ENCODE measurements at regions of chr2 and their contacts with region 1.

Region 1: GRCh38 chr2:110999275-111000025 is 121.3 kb upstream of the BCL2L11 start:
- DNase-seq: no peak
- H3K4me3 ChIP-seq: no peak overlapping the region
- H3K4me3 Mint-ChIP-seq: peak overlapping the region in 1 of 2 donors; percentile 16
- H3K27ac ChIP-seq: no peak overlapping the region
- H3K27ac Mint-ChIP-seq: no peak overlapping the region
- H3K4me1 ChIP-seq: peaks cover 34 to 44% of the 10 kb centered on the region in 2 donors
- H3K4me1 Mint-ChIP-seq: peaks cover 45% of the 10 kb centered on the region
- H3K27me3 ChIP-seq: no peaks in the 10 kb centered on the region
- H3K27me3 Mint-ChIP-seq: peaks cover 0 to 2% (median 0%) of the 10 kb centered on the region in 3 donors
- CTCF ChIP-seq: no peak

Region 2: DNA sequence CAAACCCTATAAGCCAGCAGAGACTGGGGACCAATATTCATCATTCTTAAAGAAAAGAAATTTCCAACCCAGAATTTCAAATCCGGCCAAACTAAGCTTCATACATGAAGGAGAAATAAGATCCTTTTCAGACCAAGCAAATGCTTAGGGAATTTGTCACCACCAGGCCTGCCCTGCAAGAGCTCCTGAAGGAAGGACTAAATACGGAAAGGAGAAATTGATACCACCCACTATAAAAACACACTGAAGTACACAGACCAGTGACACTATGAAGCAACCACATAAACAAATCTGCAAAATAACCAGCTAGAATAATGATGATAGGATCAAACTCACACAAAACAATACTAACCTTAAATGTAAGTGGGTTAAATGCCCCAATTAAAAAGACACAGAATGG is 817.0 kb before region 1 on chr2:
- intact Hi-C with region 1: no loop called
- DNase-seq: no peak
- H3K4me3 ChIP-seq: no peak overlapping the region
- H3K4me3 Mint-ChIP-seq: no peak overlapping the region
- H3K27ac ChIP-seq: no peak overlapping the region
- H3K27ac Mint-ChIP-seq: no peak overlapping the region
- H3K4me1 ChIP-seq: no peaks in the 10 kb centered on the region
- H3K4me1 Mint-ChIP-seq: no peaks in the 10 kb centered on the region
- H3K27me3 ChIP-seq: no peaks in the 10 kb centered on the region
- H3K27me3 Mint-ChIP-seq: peaks cover 2 to 3% (median 3%) of the 10 kb centered on the region in 3 donors
- CTCF ChIP-seq: no peak

Region 3: GRCh38 chr2:110960954-110961353 is 38.5 kb before region 1 on chr2:
- intact Hi-C with region 1: loop called in 1 of 2 experiments (anchors 5 kb)
- DNase-seq: no peak
- H3K4me3 ChIP-seq: no peak overlapping the region
- H3K4me3 Mint-ChIP-seq: no peak overlapping the region
- H3K27ac ChIP-seq: no peak overlapping the region
- H3K27ac Mint-ChIP-seq: peak overlapping the region in 1 of 7 donors; percentile 57
- H3K4me1 ChIP-seq: no peaks in the 10 kb centered on the region
- H3K4me1 Mint-ChIP-seq: peaks cover 6% of the 10 kb centered on the region
- H3K27me3 ChIP-seq: no peaks in the 10 kb centered on the region
- H3K27me3 Mint-ChIP-seq: peaks cover 0 to 2% (median 0%) of the 10 kb centered on the region in 3 donors
- CTCF ChIP-seq: no peak